ENCODE measurements at regions of chr1 and their contacts with region 1.

Region 1: GRCh38 chr1:42924082-42924850 is 34.4 kb downstream of the SLC2A1 start:
- DNase-seq: peak; percentile 94 to 99 (median 97)
- H3K4me3 ChIP-seq: peak overlapping the region; percentile 59 to 95 (median 81)
- H3K27ac ChIP-seq: peak overlapping the region; percentile 72 to 99 (median 97)
- H3K27me3 ChIP-seq: no peaks in the 10 kb centered on the region
- CTCF ChIP-seq: peak in 44 of 56 donors; percentile 6 to 63 (median 38)

Region 2: DNA sequence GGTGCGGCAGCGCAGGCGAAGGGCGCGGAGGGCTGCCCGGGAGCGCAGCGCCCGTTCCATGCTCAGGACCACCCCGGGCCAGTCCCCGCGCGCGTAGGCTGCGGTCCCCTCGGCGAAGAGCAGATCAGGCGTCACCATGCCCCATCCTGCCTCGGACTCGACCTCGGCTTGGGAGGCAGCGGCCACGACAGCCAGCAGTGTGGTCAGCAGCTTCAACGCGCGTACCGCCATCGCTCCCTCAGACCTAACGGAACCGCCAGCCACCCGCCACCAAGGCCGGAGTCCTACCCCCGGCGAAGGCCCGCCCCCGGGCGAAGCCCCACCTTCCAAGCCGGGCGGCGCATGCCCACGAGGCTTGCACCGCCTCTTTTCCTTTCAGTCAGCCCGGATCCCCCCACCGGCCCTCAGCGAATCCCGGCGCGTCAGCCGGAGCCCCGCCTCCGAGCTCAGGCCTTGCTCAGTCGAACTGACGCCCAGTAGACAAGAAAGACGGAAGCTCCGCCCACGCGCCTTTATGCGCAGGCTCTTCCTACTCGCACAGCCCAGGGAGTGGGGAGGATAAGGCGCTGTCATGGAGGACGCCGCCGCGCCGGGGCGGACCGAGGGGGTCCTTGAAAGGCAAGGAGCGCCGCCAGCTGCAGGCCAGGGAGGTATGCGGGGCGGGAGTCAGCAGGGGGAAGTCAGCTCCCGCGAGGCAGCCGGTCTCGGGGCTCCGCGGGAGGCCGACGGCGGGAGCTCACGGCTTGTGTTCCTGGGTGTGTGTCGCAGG is 157.3 kb before region 1 on chr1 and contains the starts of genes C1orf50 and P3H1:
- intact Hi-C with region 1: loop called (anchors 2 to 5 kb)
- DNase-seq: peak; percentile 99 to 100 (median 100)
- H3K4me3 ChIP-seq: peak within 1 kb of the TSS; percentile 75 to 100 (median 96)
- H3K27ac ChIP-seq: peak within 1 kb of the TSS; percentile 38 to 97 (median 88)
- H3K27me3 ChIP-seq: no peaks in the 10 kb centered on the region
- CTCF ChIP-seq: peak in 25 of 56 donors; percentile 5 to 62 (median 26)
- total RNA-seq, gene C1orf50: 5.1 to 19.5 (median 10.6) TPM
- total RNA-seq, gene P3H1: 13.8 to 34.7 (median 21.9) TPM

Region 3: DNA sequence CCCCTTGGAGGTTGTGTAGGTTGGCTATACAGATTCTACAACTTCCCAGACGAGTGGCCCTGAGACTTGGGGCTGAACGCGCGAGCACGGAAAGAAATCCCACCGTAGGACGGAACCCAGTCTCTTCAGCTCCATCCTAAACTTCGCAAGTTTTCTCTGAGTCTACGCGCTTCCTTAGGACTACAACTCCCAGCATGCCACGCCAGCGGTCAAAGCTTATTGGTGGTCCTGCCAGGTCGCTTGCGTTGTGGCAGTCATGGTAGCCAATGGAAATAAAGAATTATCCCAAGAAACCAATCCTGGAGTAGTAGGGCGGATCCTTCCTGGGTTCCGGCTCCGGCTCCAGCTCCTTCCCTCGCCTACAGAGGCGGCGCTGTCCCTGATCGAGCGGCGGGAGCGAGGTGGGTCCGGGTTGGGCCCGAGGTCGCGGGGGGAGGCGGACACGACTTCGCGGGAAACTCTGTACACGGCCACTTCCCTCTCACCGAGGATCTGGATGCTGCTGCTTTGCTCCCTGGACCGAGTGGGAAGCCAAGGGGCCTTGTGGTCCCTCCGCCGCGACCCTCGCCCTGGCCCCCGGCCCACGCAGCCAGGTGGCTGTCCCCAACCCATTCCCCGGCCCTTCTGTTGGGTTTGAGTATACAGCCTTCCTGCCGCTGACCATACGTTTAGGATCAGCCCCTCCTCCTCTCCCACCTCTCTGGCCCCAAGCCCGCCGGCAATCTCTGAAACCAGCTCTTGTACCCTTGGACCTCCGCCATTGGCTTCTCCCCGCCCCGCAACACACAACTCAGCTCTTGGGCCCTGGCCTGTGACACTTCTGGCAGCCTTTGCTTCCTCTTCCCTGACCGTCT is 77.8 kb before region 1 on chr1 and contains the start of gene ZNF691:
- intact Hi-C with region 1: loop called in 1 of 2 experiments (anchors 5 kb)
- DNase-seq: peak; percentile 85 to 97 (median 94)
- H3K4me3 ChIP-seq: peak within 1 kb of the TSS; percentile 66 to 100 (median 93)
- H3K27ac ChIP-seq: peak within 1 kb of the TSS in 57 of 59 donors; percentile 17 to 94 (median 84)
- H3K27me3 ChIP-seq: no peaks in the 10 kb centered on the region
- CTCF ChIP-seq: peak in 53 of 56 donors; percentile 20 to 74 (median 60)
- total RNA-seq, gene ZNF691: 5.0 to 13.7 (median 8.4) TPM

Region 4: DNA sequence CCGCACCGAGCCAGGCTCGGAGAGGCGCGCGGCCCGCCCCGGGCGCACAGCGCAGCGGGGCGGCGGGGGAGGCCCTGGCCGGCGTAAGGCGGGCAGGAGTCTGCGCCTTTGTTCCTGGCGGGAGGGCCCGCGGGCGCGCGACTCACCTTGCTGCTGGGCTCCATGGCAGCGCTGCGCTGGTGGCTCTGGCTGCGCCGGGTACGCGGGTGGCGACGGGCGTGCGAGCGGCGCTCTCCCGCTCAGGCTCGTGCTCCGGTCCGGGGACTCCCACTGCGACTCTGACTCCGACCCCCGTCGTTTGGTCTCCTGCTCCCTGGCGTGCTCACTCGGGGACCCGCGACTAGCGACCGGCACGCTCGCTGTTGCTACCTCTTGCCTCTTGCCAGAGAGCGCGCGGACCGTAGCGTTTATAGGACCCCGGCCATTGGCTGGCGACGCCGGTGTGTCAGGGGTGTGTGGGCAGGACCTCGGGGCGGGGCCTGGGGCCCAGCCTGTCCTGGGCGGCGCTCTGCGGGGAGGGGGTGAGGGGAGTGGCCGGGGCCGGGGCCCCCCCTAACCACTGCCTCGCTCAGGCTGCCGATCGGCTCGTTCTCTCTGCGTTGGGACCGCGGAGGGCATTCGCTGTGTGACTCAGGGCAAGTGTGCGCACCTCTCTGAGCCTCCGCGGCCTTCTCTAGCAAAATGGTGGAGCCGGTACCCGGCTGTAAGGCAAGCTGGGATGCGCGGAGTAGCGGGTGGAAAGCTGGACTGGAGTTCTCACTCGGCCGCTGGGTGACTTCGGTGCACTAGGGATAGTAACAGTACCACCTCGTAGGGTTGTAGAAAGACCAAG is 34.4 kb after region 1 on chr1 and contains the start of gene SLC2A1:
- intact Hi-C with region 1: loop called (anchors 2 kb)
- DNase-seq: peak; percentile 93 to 98 (median 97)
- H3K4me3 ChIP-seq: peak within 1 kb of the TSS; percentile 61 to 95 (median 87)
- H3K27ac ChIP-seq: peak within 1 kb of the TSS; percentile 61 to 97 (median 91)
- H3K27me3 ChIP-seq: no peaks in the 10 kb centered on the region
- CTCF ChIP-seq: peak in 13 of 56 donors; percentile 5 to 37 (median 13)
- total RNA-seq, gene SLC2A1: 36.8 to 290 (median 105) TPM

Region 5: GRCh38 chr1:43073490-43074230 is 149.4 kb after region 1 on chr1:
- intact Hi-C with region 1: loop called in 1 of 2 experiments (anchors 5 kb)
- DNase-seq: peak; percentile 65 to 89 (median 80)
- H3K4me3 ChIP-seq: peak overlapping the region in 1 of 59 donors; percentile 4
- H3K27ac ChIP-seq: peak overlapping the region in 14 of 59 donors; percentile 10 to 68 (median 38)
- H3K27me3 ChIP-seq: no peaks in the 10 kb centered on the region
- CTCF ChIP-seq: peak; percentile 82 to 97 (median 92)

Measured in dorsolateral prefrontal cortex (tissue), 120 donors.